Activated naive CD4-positive, alpha-beta T cell treated with anti-CD3 and anti-CD28 coated beads for 36 hours (primary cell): ENCODE measurements at regions of chr1 and their contacts with region 1.

Region 1: GRCh38 chr1:171313835-171314320 is at the start of gene FMO4:
- DNase-seq: peak; percentile 92
- H3K4me3 Mint-ChIP-seq: peak within 1 kb of the TSS; percentile 71
- H3K27ac Mint-ChIP-seq: peak within 1 kb of the TSS; percentile 69
- H3K4me1 Mint-ChIP-seq: peaks cover 14% of the 10 kb centered on the region
- H3K27me3 Mint-ChIP-seq: no peaks in the 10 kb centered on the region
- total RNA-seq, gene FMO4: 2.0 to 2.1 TPM

Region 2: DNA sequence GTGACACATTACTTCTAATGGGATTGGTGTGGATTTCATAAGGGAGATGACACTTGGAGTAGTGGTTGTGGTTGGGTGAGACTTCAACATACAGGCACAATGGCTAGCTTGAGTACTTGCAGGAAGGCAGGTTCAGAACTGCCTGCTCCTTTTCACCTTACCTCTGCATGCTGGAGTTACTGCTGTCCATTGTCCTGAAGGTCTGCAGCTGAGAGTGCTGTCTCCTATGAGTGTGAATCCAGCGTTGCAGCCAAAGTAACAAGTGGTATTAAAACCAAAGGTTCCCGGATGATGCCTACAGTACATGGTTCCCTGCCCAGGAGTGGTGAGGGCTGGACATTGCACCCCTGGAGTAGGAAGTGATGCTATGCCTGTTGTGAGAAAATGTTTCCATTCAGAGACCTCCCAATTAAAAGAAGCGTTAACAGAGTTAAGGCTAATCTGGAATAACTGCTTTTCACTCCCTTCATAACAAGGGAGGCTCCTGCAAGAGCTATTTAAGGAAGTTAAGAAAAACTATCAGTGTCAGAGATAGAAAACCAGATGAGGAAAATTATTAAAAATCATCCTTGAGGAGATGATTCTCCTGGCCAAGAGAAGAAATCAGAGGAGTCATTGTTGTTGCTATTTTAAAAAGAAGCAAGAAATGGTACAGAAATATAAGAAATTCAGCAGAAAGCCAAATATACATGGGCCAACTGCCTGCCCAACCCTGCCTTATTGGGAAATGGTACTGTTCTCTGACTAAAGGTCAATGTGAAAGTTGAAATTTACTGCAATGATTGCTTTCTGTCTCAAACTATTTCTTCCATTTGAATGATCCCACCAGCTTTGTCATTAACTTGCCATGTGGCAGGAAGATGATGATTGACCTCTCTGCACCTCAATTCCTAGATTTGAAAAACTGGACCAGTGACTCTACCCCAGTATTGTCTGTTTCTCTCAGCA is 1717.8 kb before region 1 on chr1:
- CTCF ChIA-PET with region 1: no interaction called
- intact Hi-C with region 1: loop called (anchors 5 kb)
- DNase-seq: peak; percentile 70
- H3K4me3 Mint-ChIP-seq: no peak overlapping the region
- H3K27ac Mint-ChIP-seq: no peak overlapping the region
- H3K4me1 Mint-ChIP-seq: peaks cover 63% of the 10 kb centered on the region
- H3K27me3 Mint-ChIP-seq: no peaks in the 10 kb centered on the region

Region 3: GRCh38 chr1:170074250-170075157 is 1239.4 kb before region 1 on chr1 and contains the start of gene KIFAP3:
- CTCF ChIA-PET with region 1: no interaction called
- intact Hi-C with region 1: loop called (anchors 1 kb)
- DNase-seq: peak; percentile 98
- H3K4me3 Mint-ChIP-seq: peak within 1 kb of the TSS; percentile 92
- H3K27ac Mint-ChIP-seq: peak within 1 kb of the TSS; percentile 74
- H3K4me1 Mint-ChIP-seq: peaks cover 48% of the 10 kb centered on the region
- H3K27me3 Mint-ChIP-seq: no peaks in the 10 kb centered on the region
- total RNA-seq, gene KIFAP3: 8.7 to 8.8 TPM

Region 4: DNA sequence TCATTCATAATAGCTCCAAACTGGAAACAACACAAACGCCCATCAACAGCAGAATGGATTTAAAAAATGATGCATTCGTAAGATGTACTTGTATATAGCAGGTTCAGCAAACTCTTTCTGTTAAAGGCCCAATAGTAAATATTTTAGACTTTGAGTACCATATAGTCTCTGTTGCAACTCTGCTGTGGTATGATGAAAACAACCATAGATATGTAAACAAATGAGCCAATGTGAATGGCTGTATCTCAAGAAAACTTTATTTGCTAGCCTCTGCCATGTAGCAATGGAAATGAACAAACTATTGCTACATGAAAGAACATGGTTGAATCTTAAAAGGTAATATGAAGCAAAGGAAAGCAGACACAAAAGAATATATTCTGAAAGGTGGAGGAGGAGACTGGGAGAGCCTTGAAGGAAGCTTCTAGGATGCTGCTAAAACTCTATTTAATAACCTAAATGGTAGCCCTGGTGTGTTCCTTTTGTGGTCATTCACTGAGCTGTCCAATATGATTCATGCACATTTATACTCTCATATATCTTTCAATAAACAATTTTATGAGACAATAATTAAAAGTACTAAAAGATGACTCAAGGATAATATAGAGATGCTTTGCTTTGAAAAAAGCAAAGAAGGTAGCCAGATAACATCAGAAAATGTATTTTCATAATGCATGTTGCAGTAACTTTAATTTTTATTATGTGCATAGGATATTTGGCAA is 252.3 kb before region 1 on chr1:
- CTCF ChIA-PET with region 1: no interaction called
- intact Hi-C with region 1: no loop called
- DNase-seq: no peak
- H3K4me3 Mint-ChIP-seq: no peak overlapping the region
- H3K27ac Mint-ChIP-seq: no peak overlapping the region
- H3K4me1 Mint-ChIP-seq: no peaks in the 10 kb centered on the region
- H3K27me3 Mint-ChIP-seq: peaks cover 3% of the 10 kb centered on the region

Region 5: DNA sequence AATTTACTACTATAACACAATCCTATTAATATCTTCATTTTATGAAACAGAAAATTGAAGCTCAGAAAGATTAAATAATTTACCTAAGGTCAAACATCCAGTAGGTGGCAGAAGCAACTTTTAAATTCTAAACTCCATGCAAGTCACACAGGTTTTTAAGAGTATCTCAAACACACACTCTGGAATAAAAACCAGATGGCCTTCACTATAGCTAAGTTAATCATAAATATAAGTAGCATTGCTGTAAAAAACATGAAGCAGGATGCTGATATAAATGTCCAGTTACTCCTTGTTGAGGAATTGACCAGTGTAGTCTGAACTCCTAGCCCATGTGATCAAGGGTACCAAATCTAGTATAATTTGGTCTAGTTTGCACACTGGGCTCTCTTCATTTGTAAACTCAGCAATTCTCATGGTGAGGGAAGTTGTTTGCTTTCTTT is 232.5 kb before region 1 on chr1:
- CTCF ChIA-PET with region 1: interaction called, 8 read pairs
- intact Hi-C with region 1: loop called (anchors 1 kb)
- DNase-seq: no peak
- H3K4me3 Mint-ChIP-seq: no peak overlapping the region
- H3K27ac Mint-ChIP-seq: no peak overlapping the region
- H3K4me1 Mint-ChIP-seq: no peaks in the 10 kb centered on the region
- H3K27me3 Mint-ChIP-seq: peaks cover 4% of the 10 kb centered on the region

Region 6: GRCh38 chr1:171251042-171251951 is 62.6 kb before region 1 on chr1:
- CTCF ChIA-PET with region 1: interaction called, 96 read pairs
- intact Hi-C with region 1: loop called (anchors 1 kb)
- DNase-seq: peak; percentile 50
- H3K4me3 Mint-ChIP-seq: peak overlapping the region; percentile 77
- H3K27ac Mint-ChIP-seq: no peak overlapping the region
- H3K4me1 Mint-ChIP-seq: no peaks in the 10 kb centered on the region
- H3K27me3 Mint-ChIP-seq: peaks cover 38% of the 10 kb centered on the region

Region 7: GRCh38 chr1:171715813-171716251 is 402.0 kb after region 1 on chr1:
- CTCF ChIA-PET with region 1: interaction called, 4 read pairs
- intact Hi-C with region 1: loop called (anchors 10 kb)
- DNase-seq: no peak
- H3K4me3 Mint-ChIP-seq: no peak overlapping the region
- H3K27ac Mint-ChIP-seq: no peak overlapping the region
- H3K4me1 Mint-ChIP-seq: peaks cover 4% of the 10 kb centered on the region
- H3K27me3 Mint-ChIP-seq: no peaks in the 10 kb centered on the region